ENCODE measurements at regions of chr1 and their contacts with region 1.

Region 1: GRCh38 chr1:172380441-172381244 is 39.8 kb upstream of the C1orf105 start:
- DNase-seq: no peak
- ATAC-seq: peak; percentile 100
- H3K4me3 Mint-ChIP-seq: peak overlapping the region; percentile 77
- H3K27ac Mint-ChIP-seq: peak overlapping the region; percentile 89
- H3K4me1 Mint-ChIP-seq: peaks cover 18% of the 10 kb centered on the region
- H3K27me3 Mint-ChIP-seq: no peaks in the 10 kb centered on the region

Region 2: GRCh38 chr1:172357753-172358385 is 22.8 kb before region 1 on chr1:
- POLR2A ChIA-PET with region 1: interaction called, 17 read pairs
- DNase-seq: no peak
- ATAC-seq: no peak
- H3K4me3 Mint-ChIP-seq: peak overlapping the region; percentile 26
- H3K27ac Mint-ChIP-seq: peak overlapping the region; percentile 3
- H3K4me1 Mint-ChIP-seq: peaks cover 25% of the 10 kb centered on the region
- H3K27me3 Mint-ChIP-seq: no peaks in the 10 kb centered on the region

Region 3: GRCh38 chr1:172394141-172394751 is 13.6 kb after region 1 on chr1:
- POLR2A ChIA-PET with region 1: interaction called, 16 read pairs
- DNase-seq: peak; percentile 51
- ATAC-seq: peak; percentile 100
- H3K4me3 Mint-ChIP-seq: peak overlapping the region; percentile 78
- H3K27ac Mint-ChIP-seq: peak overlapping the region; percentile 95
- H3K4me1 Mint-ChIP-seq: peaks cover 44% of the 10 kb centered on the region
- H3K27me3 Mint-ChIP-seq: no peaks in the 10 kb centered on the region